ENCODE measurements at regions of chr11 and their contacts with region 1.

Region 1: DNA sequence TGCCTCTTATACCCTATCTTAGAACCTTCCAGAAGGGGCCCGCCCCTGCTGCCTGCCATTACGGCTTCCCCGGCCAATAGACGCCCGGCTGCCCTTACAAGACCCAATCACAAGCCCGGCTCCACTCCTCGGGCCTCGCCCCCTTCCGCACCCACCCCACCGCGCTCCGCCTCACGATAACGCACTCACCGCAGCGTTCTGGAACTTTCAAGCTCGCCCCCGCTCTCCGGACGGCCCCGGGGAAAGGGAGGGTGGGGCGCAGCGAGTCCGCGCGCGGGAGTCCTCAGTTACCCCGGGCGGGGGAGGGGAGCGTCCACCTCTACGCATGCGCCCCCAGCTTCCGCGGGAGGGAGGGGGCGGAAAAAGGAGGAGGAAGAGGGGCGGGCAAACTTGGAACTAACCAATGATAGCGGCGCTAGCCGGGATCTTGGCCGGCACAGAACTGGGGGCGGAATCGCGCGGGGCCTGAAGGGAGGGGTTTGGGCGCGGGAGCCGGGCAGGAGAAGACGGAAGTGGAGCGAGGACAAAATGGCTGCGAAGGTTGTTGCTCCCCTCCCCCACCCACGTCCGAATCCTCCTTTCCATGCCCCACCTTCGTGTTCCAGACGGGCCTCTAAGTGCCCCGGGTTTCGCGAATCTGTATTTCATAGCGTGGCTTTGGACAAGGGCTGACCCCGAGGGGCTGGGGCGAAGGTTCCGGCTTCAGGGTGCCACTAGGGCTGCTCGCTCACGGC is 389 bp upstream of the HSPA8 start:
- DNase-seq: peak; percentile 99
- H3K4me3 Mint-ChIP-seq: peak overlapping the region; percentile 98
- H3K27ac Mint-ChIP-seq: peak overlapping the region; percentile 100
- H3K4me1 Mint-ChIP-seq: peaks cover 43% of the 10 kb centered on the region
- H3K27me3 Mint-ChIP-seq: peaks cover 2% of the 10 kb centered on the region

Region 2: DNA sequence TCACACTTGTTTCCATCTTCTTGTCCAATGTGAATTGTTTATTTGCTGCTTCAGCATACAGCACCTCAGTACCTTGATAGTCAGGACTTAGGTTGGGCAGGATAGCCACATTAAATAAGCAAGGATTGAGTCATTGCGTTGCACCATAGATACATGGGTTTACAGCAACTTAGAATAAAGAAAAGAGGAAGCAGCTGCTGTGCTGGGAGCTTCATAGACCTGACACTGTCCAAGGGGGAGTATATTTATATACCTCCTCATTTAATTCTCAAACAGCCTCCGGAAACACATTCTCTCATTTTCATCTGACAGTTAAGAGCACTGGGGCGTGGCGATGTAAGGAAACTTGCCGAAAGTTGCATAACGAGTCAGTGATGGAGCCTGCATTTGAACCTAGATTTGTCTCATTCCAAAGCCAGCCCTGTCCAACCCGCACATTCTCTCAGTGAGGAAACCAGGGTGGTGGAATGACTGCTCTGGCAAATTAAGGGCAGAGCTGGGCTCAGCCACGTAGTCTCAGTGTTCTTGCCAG is 364.6 kb before region 1 on chr11:
- intact Hi-C with region 1: loop called (anchors 2 kb)
- DNase-seq: peak; percentile 16
- H3K4me3 Mint-ChIP-seq: peak overlapping the region; percentile 70
- H3K27ac Mint-ChIP-seq: peak overlapping the region; percentile 78
- H3K4me1 Mint-ChIP-seq: peaks cover 45% of the 10 kb centered on the region
- H3K27me3 Mint-ChIP-seq: peaks cover 4% of the 10 kb centered on the region

Region 3: GRCh38 chr11:123083623-123084029 is 21.3 kb after region 1 on chr11:
- intact Hi-C with region 1: loop called (anchors 1 kb)
- DNase-seq: peak; percentile 70
- H3K4me3 Mint-ChIP-seq: peak overlapping the region; percentile 55
- H3K27ac Mint-ChIP-seq: peak overlapping the region; percentile 79
- H3K4me1 Mint-ChIP-seq: peaks cover 50% of the 10 kb centered on the region
- H3K27me3 Mint-ChIP-seq: no peaks in the 10 kb centered on the region

Region 4: GRCh38 chr11:123166071-123166559 is 103.8 kb after region 1 on chr11:
- intact Hi-C with region 1: no loop called
- DNase-seq: no peak
- H3K4me3 Mint-ChIP-seq: no peak overlapping the region
- H3K27ac Mint-ChIP-seq: no peak overlapping the region
- H3K4me1 Mint-ChIP-seq: no peaks in the 10 kb centered on the region
- H3K27me3 Mint-ChIP-seq: peaks cover 12% of the 10 kb centered on the region

Region 5: GRCh38 chr11:123261345-123262106 is 199.2 kb after region 1 on chr11:
- intact Hi-C with region 1: no loop called
- DNase-seq: peak; percentile 59
- H3K4me3 Mint-ChIP-seq: no peak overlapping the region
- H3K27ac Mint-ChIP-seq: no peak overlapping the region
- H3K4me1 Mint-ChIP-seq: peaks cover 22% of the 10 kb centered on the region
- H3K27me3 Mint-ChIP-seq: peaks cover 17% of the 10 kb centered on the region

Region 6: DNA sequence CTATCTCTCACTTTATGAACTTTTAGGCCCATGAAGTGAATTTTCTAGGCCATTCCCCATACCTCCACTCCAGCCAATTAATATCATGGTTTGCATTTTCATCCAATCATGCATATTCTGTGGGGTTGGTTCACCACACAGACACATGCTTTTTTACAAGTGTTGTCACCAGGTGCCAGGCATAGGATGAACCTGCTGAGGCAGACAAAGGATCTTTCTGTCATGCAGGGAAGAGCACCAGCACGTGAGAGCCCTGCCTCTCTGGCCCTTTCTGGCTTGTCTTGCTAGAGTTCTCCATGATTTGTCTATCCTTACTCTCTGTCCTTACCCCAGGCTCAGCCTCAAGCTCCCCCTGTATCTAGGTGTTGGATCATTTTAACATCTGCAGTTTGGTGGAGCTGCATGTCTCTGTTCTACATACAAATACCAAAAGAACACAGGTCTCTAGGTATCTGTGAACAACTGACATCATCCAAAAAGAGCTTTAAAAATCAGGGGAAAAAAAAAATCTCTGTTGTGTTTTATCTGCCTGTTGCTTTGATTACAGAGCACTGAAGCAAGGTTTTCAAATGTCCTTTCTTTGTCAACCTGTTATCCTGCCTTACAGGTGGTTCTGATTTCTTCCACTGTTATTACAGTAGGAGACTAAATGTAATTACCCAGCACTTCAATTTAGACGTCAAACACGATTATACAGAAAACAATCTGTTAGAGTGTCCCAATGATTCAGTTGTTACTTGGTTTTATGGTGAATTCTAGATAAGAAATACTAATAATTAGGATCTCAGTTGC is 309.4 kb after region 1 on chr11:
- intact Hi-C with region 1: no loop called
- DNase-seq: no peak
- H3K4me3 Mint-ChIP-seq: no peak overlapping the region
- H3K27ac Mint-ChIP-seq: no peak overlapping the region
- H3K4me1 Mint-ChIP-seq: peaks cover 60% of the 10 kb centered on the region
- H3K27me3 Mint-ChIP-seq: no peaks in the 10 kb centered on the region

Region 7: DNA sequence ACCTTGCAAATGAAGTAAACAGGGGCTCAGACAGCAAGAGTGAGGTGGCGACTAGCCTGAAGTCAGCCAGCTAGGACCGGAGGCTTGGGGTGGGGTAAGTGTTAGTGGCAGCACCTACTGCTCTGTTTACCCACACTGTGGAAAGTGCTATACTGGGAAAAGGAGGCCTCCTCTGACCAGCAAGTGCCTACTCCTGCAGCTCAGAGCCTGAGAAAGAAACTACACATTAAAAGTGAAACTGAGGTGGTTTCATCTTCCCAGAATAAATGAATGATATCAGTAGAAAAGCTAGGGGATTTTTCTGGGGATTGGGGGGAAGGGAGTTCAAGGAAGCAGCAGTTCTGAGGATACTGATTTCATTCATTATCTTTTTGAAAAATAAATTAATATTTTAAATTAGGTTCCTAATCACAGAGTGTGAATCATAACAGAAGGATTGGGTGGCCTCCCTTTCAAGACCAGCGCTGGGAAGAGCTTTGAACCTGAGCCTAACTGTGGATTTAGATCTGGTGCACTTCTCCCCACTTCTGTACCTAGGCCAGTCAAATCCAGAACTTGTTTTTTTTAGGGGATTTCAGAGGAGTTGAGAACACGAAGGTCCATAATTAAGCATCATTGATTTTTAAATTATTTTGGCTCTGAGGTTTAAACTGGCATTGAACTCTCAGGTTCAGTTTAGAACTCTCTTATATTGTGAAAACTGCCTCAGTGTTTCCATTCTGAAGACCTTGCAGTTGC is 319.7 kb after region 1 on chr11:
- intact Hi-C with region 1: loop called (anchors 1 kb)
- DNase-seq: peak; percentile 70
- H3K4me3 Mint-ChIP-seq: peak overlapping the region; percentile 62
- H3K27ac Mint-ChIP-seq: peak overlapping the region; percentile 79
- H3K4me1 Mint-ChIP-seq: peaks cover 49% of the 10 kb centered on the region
- H3K27me3 Mint-ChIP-seq: no peaks in the 10 kb centered on the region

Region 8: DNA sequence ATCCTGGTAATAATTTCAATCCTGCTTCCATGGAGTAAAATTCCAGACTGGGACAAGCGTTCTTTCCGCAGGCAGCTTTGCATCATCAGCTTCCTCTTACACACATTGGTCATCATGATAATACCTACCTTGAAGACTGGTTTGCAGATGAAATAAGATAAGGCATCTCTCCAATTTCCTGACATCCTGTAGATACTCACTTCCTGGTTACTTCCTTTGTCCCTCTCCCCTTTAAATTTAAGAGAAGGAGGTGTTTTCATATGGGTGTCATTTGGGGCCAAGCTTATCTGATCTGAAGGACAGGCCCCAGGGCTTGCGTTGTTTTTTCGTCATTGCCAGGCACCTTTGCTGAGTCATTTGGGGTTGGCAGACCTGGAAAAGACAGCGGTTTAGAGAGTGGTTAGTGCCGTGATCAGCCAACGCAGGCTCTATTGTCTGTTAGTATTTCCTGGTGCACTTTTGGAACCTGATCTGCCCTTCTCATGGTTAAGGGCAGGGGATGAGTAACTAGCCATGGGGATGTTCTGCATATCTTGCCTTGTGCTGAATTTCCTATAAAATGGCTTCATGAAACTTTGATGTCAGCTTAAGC is 391.8 kb after region 1 on chr11:
- intact Hi-C with region 1: loop called (anchors 2 kb)
- DNase-seq: peak; percentile 74
- H3K4me3 Mint-ChIP-seq: peak overlapping the region; percentile 82
- H3K27ac Mint-ChIP-seq: peak overlapping the region; percentile 97
- H3K4me1 Mint-ChIP-seq: peaks cover 98% of the 10 kb centered on the region
- H3K27me3 Mint-ChIP-seq: no peaks in the 10 kb centered on the region

Region 9: DNA sequence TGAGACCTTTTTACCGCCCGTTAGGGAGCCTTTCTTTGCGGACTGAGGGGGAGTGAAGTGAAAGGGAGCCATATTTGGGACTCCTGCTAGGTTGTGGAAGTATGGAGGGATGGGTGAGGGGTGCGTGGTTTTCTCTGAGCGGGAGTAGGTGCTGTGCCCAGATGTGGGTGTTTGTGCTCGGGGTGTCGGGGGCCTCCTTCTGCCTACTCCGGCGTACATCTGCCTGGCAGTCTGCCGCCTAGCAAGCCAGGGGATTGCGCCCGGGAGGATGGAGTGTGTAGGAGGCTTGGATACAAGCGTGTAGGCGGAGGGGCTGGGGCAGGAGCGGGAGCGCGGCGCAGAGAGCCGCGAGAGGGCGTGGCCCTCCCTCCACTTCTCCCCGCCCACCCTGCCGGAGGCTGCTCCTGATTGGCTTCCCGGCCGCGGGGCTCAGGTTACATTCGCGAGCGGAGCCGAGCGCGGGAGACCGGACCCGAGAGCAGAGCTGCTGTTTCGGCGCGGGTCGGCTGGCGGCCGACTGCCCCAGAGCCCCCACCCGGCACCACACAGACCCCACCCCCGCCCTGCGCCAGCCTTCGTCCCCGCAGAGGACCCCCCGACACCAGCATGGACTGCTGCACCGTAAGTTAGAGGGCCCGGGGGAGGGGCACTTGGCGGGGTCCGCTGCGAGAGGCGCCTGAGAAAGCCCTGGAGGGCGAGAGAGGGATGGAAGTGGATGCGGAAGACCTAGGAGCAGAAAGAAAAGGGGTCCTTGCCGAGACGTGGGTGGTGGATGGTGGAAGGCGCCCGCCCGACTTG is 1677.4 kb after region 1 on chr11 and contains the start of gene NRGN:
- intact Hi-C with region 1: loop called (anchors 10 kb)
- DNase-seq: peak; percentile 80
- H3K4me3 Mint-ChIP-seq: peak within 1 kb of the TSS; percentile 85
- H3K27ac Mint-ChIP-seq: peak within 1 kb of the TSS; percentile 54
- H3K4me1 Mint-ChIP-seq: peaks cover 25% of the 10 kb centered on the region
- H3K27me3 Mint-ChIP-seq: peaks cover 38% of the 10 kb centered on the region
- total RNA-seq, gene NRGN: 3.9 and 6.1 TPM in 2 replicates

Measured in activated T-helper 1 cell treated with anti-CD3 and anti-CD28 coated beads, Interleukin-12 subunit alpha, Interleukin-12 subunit beta, Interleukin-2, Interleukin-4 antibody, amounts not matched to agents 30 ng/mL and 10 ng/mL and 1 ng/mL, durations not matched to agents 14 hours and 24 hours and 36 hours (primary cell).